GM13976 (cell line): ENCODE measurements at regions of chr21 and their contacts with region 1.

Region 1: GRCh38 chr21:25607151-25608043 is at the start of gene MRPL39:
- DNase-seq: peak; percentile 96
- CTCF ChIP-seq: peak; percentile 82

Region 2: GRCh38 chr21:25862596-25862995 is 255.2 kb after region 1 on chr21:
- in situ Hi-C with region 1: loop called (anchors 25 kb)
- DNase-seq: peak; percentile 38
- CTCF ChIP-seq: peak; percentile 58

Region 3: DNA sequence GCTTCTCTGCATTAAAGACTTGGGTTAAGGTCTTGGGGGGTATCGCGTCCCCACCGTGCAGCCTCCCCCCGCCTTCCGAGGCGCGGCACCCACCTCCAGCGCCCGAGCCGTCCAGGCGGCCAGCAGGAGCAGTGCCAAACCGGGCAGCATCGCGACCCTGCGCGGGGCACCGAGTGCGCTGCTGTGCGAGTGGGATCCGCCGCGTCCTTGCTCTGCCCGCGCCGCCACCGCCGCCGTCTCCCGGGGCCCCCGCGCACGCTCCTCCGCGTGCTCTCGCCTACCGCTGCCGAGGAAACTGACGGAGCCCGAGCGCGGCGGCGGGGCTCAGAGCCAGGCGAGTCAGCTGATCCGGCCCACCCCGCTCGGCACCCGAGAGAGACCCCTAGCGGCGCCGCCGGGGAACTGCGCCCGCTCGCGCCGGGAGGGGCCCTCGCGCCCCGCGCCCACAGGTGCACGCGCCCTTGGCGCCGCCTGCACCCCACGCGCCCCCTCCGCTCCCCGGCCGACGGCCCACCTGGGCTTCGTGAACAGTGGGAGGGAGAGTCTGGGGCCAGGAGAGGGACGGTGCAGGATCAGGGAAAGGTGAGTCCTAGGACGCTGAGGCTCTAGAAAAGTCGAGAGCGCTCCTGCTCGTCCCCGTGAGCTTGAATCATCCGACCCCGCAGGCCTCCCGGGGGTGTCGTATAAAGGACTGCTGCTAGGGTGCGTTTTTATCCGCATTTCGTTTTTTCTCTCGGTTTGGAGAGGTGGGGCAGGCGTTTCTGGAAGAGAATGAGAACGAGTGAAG is 563.3 kb after region 1 on chr21 and contains the start of gene APP:
- in situ Hi-C with region 1: loop called (anchors 25 kb)
- DNase-seq: peak; percentile 96
- CTCF ChIP-seq: peak; percentile 97